ENCODE measurements at regions of chrX and their contacts with region 1.

Region 1: DNA sequence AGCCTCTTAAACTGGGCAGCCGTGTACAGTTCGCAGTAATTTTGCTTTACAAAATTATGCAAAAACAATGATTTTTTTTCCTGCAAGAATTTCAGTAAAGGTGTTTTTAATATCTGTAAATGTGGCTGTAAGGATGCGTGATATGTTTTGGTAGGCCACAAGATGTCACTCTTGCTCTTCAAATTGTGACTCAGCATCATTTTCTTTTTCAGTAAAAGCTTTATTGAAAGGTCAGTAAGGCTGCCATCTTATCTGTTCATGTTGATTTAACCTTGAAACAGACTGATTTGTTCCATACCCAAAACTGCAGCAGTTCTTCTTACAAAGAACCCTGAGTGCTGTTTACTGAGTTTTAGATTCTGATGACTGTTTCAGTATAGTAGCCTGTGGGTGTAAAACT is 39.9 kb downstream of the TXLNG start:
- DNase-seq: peak in 2 of 9 experiments; percentile 17 to 44
- ATAC-seq: no peak
- H3K4me3 ChIP-seq: no peak overlapping the region
- H3K4me3 Mint-ChIP-seq: no peak overlapping the region
- H3K27ac ChIP-seq: no peak overlapping the region
- H3K27ac Mint-ChIP-seq: no peak overlapping the region
- H3K4me1 ChIP-seq: no peaks in the 10 kb centered on the region
- H3K4me1 Mint-ChIP-seq: no peaks in the 10 kb centered on the region
- H3K27me3 ChIP-seq: no peaks in the 10 kb centered on the region
- H3K27me3 Mint-ChIP-seq: no peaks in the 10 kb centered on the region
- CTCF ChIP-seq: peak; percentile 31

Region 2: DNA sequence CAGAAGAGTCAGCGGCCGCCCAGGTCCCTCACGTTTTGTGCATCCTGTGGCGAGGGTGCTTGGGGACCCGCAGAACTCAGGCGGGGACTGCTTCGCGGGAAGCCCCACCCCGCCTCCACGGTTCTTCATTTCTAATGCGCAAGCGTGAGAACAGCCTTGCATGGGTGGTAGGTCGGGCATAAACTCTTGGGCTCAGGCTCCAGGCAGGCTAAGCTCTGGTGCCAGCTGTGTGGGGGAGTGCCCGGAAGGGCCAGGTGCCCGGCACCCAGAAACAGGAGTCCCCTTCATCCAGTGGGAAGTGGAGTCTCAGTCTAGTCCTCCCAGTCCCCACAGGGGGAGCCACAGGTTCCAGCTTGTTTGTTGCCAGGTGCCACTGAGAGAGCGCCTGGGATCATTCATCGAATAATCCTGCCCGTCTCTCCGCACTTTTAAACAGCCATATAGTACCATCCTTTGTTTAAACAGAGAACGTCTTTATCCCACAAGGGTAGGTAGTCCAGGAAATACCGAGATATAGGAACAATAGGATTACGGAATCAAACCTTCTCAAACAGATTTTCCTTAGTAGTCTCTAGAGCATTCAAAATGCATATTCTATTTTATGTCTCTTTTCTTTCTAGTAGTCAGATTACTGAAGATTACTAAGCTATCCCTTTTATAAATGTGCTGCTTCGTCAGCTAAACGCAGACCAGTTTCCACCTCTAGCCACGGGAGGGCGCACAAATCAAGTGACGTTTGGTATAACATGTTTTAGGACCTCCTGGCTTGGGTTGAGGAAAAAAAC is 56.7 kb after region 1 on chrX:
- CTCF ChIA-PET with region 1: interaction called, 13 read pairs
- POLR2A ChIA-PET with region 1: no interaction called
- intact Hi-C with region 1: no loop called
- DNase-seq: peak; percentile 44 to 79 (median 71)
- ATAC-seq: peak; percentile 81
- H3K4me3 ChIP-seq: peak overlapping the region; percentile 56 to 72
- H3K4me3 Mint-ChIP-seq: peak overlapping the region; percentile 79
- H3K27ac ChIP-seq: peak overlapping the region; percentile 45 to 66
- H3K27ac Mint-ChIP-seq: peak overlapping the region; percentile 83
- H3K4me1 ChIP-seq: peaks cover 3% of the 10 kb centered on the region
- H3K4me1 Mint-ChIP-seq: peaks cover 9% of the 10 kb centered on the region
- H3K27me3 ChIP-seq: no peaks in the 10 kb centered on the region
- H3K27me3 Mint-ChIP-seq: no peaks in the 10 kb centered on the region
- CTCF ChIP-seq: peak; percentile 70

Region 3: DNA sequence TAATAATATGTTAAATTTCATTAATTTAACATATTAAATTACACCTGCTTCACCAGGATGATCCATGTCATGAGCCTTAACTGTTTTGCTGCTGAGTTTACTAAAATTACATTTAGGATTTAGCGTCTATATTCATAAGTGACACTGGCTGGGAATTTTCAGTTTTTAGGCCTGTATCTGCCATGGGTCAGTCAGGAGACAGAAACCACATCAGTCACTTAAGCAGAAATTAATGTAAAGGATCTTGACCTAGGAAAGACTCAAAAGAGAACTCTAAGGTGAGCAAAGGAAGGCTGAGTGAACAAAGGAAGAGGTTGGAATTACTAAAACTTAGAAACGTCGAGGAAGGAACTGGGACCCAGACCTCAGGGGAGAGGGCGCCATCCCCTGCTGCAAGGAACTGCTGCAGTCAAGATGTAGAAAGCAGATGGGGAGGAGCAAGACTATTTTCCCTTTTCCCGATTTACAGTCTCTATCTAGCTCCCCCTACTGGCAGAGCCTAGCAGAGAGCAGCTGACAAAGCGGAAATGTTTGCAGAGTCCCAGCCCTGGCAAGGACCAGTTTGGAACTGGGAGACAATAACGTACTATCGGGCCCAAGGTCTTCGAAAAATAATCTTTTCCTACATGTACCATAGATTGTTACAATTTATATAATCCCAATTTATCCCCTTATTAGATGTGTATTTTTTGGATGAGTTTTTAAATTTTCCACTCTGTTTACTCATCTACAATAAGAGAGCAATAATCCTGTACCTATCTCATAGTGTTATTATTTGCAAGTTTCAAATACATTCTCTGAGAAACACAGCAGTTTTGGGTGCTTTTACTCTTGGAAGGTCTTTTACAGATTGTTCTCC is 66.5 kb after region 1 on chrX:
- CTCF ChIA-PET with region 1: interaction called, 10 read pairs
- POLR2A ChIA-PET with region 1: no interaction called
- intact Hi-C with region 1: loop called in 1 of 2 experiments (anchors 2 kb)
- DNase-seq: peak; percentile 7 to 79 (median 53)
- ATAC-seq: peak; percentile 39
- H3K4me3 ChIP-seq: no peak overlapping the region
- H3K4me3 Mint-ChIP-seq: no peak overlapping the region
- H3K27ac ChIP-seq: no peak overlapping the region
- H3K27ac Mint-ChIP-seq: no peak overlapping the region
- H3K4me1 ChIP-seq: peaks cover 9% of the 10 kb centered on the region
- H3K4me1 Mint-ChIP-seq: peaks cover 13% of the 10 kb centered on the region
- H3K27me3 ChIP-seq: no peaks in the 10 kb centered on the region
- H3K27me3 Mint-ChIP-seq: no peaks in the 10 kb centered on the region
- CTCF ChIP-seq: peak; percentile 65

Region 4: GRCh38 chrX:16953606-16954220 is 127.5 kb after region 1 on chrX:
- CTCF ChIA-PET with region 1: no interaction called
- POLR2A ChIA-PET with region 1: no interaction called
- intact Hi-C with region 1: no loop called
- DNase-seq: no peak
- ATAC-seq: no peak
- H3K4me3 ChIP-seq: no peak overlapping the region
- H3K4me3 Mint-ChIP-seq: no peak overlapping the region
- H3K27ac ChIP-seq: no peak overlapping the region
- H3K27ac Mint-ChIP-seq: no peak overlapping the region
- H3K4me1 ChIP-seq: no peaks in the 10 kb centered on the region
- H3K4me1 Mint-ChIP-seq: peaks cover 2% of the 10 kb centered on the region
- H3K27me3 ChIP-seq: no peaks in the 10 kb centered on the region
- H3K27me3 Mint-ChIP-seq: peaks cover 21% of the 10 kb centered on the region
- CTCF ChIP-seq: no peak

Region 5: DNA sequence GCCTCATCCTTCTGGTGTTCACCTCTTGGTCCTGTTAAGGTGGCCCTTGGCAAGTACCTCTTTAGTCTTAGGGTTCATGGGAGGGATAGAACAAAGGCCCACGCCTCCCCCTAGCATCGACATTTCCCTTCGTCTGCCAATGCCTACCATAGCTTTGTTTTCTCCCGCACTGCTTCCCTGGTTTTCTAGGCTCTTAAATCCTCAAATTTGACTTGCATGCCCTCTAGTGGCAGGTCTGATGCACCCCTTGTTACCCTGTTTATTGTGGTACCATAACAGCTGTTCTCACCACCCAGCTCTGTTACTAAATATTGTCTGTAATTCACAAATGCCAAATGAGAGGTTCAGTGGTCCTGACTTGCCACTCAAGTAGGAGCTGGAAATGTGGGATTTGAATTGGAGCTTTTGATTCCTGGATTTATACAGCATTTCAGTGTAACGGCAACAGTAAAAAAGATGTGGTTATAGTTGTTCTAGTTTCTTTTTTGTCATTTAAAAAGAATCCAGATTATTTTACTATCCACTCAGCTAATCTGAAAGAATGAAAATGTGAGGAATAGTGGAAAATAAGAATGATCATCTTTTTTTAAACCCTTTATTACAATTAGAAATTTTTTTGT is 220.4 kb after region 1 on chrX:
- CTCF ChIA-PET with region 1: interaction called, 11 read pairs
- POLR2A ChIA-PET with region 1: no interaction called
- intact Hi-C with region 1: loop called in 1 of 2 experiments (anchors 2 kb)
- DNase-seq: peak in 6 of 9 experiments; percentile 2 to 53 (median 28)
- ATAC-seq: peak; percentile 59
- H3K4me3 ChIP-seq: no peak overlapping the region
- H3K4me3 Mint-ChIP-seq: no peak overlapping the region
- H3K27ac ChIP-seq: no peak overlapping the region
- H3K27ac Mint-ChIP-seq: no peak overlapping the region
- H3K4me1 ChIP-seq: no peaks in the 10 kb centered on the region
- H3K4me1 Mint-ChIP-seq: no peaks in the 10 kb centered on the region
- H3K27me3 ChIP-seq: no peaks in the 10 kb centered on the region
- H3K27me3 Mint-ChIP-seq: no peaks in the 10 kb centered on the region
- CTCF ChIP-seq: peak; percentile 40

Region 6: GRCh38 chrX:17590892-17591740 is 764.9 kb after region 1 on chrX:
- CTCF ChIA-PET with region 1: no interaction called
- POLR2A ChIA-PET with region 1: no interaction called
- intact Hi-C with region 1: loop called in 1 of 2 experiments (anchors 5 kb)
- DNase-seq: peak in 4 of 9 experiments; percentile 7 to 32 (median 10)
- ATAC-seq: peak; percentile 36
- H3K4me3 ChIP-seq: no peak overlapping the region
- H3K4me3 Mint-ChIP-seq: no peak overlapping the region
- H3K27ac ChIP-seq: no peak overlapping the region
- H3K27ac Mint-ChIP-seq: no peak overlapping the region
- H3K4me1 ChIP-seq: no peaks in the 10 kb centered on the region
- H3K4me1 Mint-ChIP-seq: peaks cover 2% of the 10 kb centered on the region
- H3K27me3 ChIP-seq: no peaks in the 10 kb centered on the region
- H3K27me3 Mint-ChIP-seq: peaks cover 3% of the 10 kb centered on the region
- CTCF ChIP-seq: peak; percentile 23

Region 7: GRCh38 chrX:17689971-17690409 is 863.8 kb after region 1 on chrX:
- CTCF ChIA-PET with region 1: no interaction called
- POLR2A ChIA-PET with region 1: no interaction called
- intact Hi-C with region 1: loop called in 1 of 2 experiments (anchors 10 kb)
- DNase-seq: peak in 5 of 9 experiments; percentile 13 to 65 (median 29)
- ATAC-seq: peak; percentile 40
- H3K4me3 ChIP-seq: no peak overlapping the region
- H3K4me3 Mint-ChIP-seq: no peak overlapping the region
- H3K27ac ChIP-seq: no peak overlapping the region
- H3K27ac Mint-ChIP-seq: no peak overlapping the region
- H3K4me1 ChIP-seq: no peaks in the 10 kb centered on the region
- H3K4me1 Mint-ChIP-seq: no peaks in the 10 kb centered on the region
- H3K27me3 ChIP-seq: no peaks in the 10 kb centered on the region
- H3K27me3 Mint-ChIP-seq: no peaks in the 10 kb centered on the region
- CTCF ChIP-seq: peak; percentile 51